Activated CD4-positive, alpha-beta T cell treated with anti-CD3 and anti-CD28 coated beads for 36 hours (primary cell): ENCODE measurements at regions of chr20 and their contacts with region 1.

Region 1: GRCh38 chr20:5749952-5750779 is at the start of gene SHLD1:
- DNase-seq: peak; percentile 89
- ATAC-seq: peak; percentile 98
- H3K4me3 Mint-ChIP-seq: peak within 1 kb of the TSS; percentile 86
- H3K27ac Mint-ChIP-seq: peak within 1 kb of the TSS; percentile 94
- H3K4me1 Mint-ChIP-seq: peaks cover 19% of the 10 kb centered on the region
- H3K27me3 Mint-ChIP-seq: no peaks in the 10 kb centered on the region
- total RNA-seq, gene SHLD1: 10.4 to 10.5 TPM

Region 2: DNA sequence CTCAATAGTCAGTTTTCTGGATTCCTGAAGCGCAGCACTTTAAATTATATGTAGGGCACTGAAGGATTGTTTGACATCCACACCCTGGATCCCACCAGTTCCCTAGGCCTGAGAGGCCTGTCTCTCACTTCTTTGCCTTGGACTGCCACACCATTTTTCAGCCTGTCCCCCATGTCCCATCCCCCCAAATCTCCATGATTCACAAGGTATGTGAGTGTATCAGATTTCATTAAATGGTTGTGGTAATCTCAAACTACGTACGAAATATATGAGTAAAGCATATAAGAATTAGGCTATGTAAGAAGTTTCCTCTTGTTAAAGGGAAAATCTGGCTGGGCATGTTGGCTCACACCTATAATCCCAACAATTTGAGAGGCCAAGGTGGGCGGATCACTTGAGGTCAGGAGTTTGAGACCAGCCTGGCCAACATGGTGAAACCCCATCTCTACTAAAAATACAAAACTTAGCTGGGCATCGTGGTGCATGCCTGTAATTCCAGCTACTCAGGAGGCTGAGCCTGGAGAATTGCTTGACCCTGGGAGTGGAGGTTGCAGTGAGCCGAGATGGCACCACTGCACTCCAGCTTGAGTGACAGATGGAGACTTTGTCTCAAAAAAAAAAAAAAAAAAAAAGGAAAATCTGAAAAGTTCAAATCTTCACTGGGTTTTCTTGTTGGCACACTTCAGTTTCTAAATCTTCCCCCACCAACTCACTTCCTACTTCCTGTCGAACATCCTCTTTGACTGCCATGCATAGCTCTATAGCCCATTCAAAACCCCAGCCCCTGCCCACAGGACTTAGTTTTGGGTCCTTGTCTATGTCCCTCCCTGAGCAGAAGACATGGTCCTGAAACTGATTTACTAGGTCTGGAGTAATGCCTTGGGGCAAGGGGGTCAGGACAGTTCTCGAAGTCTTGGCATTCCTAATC is 97.3 kb before region 1 on chr20:
- CTCF ChIA-PET with region 1: no interaction called
- POLR2A ChIA-PET with region 1: interaction called, 10 read pairs
- intact Hi-C with region 1: no loop called
- DNase-seq: no peak
- ATAC-seq: no peak
- H3K4me3 Mint-ChIP-seq: no peak overlapping the region
- H3K27ac Mint-ChIP-seq: peak overlapping the region; percentile 83
- H3K4me1 Mint-ChIP-seq: peaks cover 35% of the 10 kb centered on the region
- H3K27me3 Mint-ChIP-seq: no peaks in the 10 kb centered on the region

Region 3: GRCh38 chr20:5658912-5659345 is 91.2 kb before region 1 on chr20:
- CTCF ChIA-PET with region 1: no interaction called
- POLR2A ChIA-PET with region 1: no interaction called
- intact Hi-C with region 1: loop called in 1 of 2 experiments (anchors 1 kb)
- DNase-seq: peak; percentile 82
- ATAC-seq: peak; percentile 73
- H3K4me3 Mint-ChIP-seq: no peak overlapping the region
- H3K27ac Mint-ChIP-seq: peak overlapping the region; percentile 47
- H3K4me1 Mint-ChIP-seq: peaks cover 31% of the 10 kb centered on the region
- H3K27me3 Mint-ChIP-seq: no peaks in the 10 kb centered on the region

Region 4: GRCh38 chr20:5714261-5715041 is 35.7 kb before region 1 on chr20:
- CTCF ChIA-PET with region 1: no interaction called
- POLR2A ChIA-PET with region 1: interaction called, 3 read pairs
- intact Hi-C with region 1: loop called (anchors 1 to 5 kb)
- DNase-seq: peak; percentile 69
- ATAC-seq: peak; percentile 93
- H3K4me3 Mint-ChIP-seq: no peak overlapping the region
- H3K27ac Mint-ChIP-seq: peak overlapping the region; percentile 82
- H3K4me1 Mint-ChIP-seq: peaks cover 34% of the 10 kb centered on the region
- H3K27me3 Mint-ChIP-seq: no peaks in the 10 kb centered on the region

Region 5: DNA sequence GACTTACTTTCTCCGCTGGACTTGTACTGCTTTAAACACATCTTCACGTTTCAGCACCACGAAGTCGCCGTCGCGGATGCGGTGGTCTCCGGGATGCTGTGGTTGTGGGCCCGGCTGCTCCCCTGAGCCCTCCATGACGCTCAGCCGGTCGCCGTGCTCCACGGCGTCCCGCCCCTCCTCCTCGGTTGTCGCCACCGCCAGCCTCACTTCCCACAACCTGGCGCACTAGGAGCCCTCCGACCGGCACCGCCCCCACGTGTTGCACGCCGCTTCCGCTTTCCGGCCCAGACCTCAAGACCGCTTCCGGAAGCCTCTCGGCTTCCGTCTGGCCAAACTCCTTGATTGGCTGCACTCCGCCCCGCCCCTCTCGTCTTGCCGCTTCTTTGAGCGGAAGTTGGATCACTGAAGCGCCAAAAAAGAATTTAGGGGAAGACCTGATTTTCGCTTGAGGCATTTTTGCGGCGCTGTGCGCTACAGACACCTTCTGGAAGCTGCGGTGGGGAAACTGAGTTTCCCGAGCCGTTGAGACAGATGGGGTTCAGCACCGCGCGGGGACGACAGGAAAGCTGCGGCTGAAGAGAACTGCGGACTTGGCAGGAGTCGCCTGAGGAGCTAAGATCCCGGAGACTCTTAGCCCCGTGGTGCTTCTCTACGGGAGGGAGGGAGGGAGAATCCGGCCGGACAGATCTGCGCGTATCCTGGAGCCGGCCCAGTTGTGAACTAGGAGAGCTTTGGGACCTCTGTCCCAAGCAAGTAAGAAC is 200.3 kb after region 1 on chr20 and contains the starts of genes MCM8 and TRMT6:
- CTCF ChIA-PET with region 1: no interaction called
- POLR2A ChIA-PET with region 1: no interaction called
- intact Hi-C with region 1: loop called in 1 of 2 experiments (anchors 1 kb)
- DNase-seq: peak; percentile 98
- ATAC-seq: peak; percentile 87
- H3K4me3 Mint-ChIP-seq: peak within 1 kb of the TSS; percentile 95
- H3K27ac Mint-ChIP-seq: peak within 1 kb of the TSS; percentile 96
- H3K4me1 Mint-ChIP-seq: peaks cover 49% of the 10 kb centered on the region
- H3K27me3 Mint-ChIP-seq: no peaks in the 10 kb centered on the region
- total RNA-seq, gene MCM8: 42.5 to 45.4 TPM
- total RNA-seq, gene TRMT6: 20.9 to 27.3 TPM